ENCODE measurements at regions of chr14 and their contacts with region 1.

Region 1: DNA sequence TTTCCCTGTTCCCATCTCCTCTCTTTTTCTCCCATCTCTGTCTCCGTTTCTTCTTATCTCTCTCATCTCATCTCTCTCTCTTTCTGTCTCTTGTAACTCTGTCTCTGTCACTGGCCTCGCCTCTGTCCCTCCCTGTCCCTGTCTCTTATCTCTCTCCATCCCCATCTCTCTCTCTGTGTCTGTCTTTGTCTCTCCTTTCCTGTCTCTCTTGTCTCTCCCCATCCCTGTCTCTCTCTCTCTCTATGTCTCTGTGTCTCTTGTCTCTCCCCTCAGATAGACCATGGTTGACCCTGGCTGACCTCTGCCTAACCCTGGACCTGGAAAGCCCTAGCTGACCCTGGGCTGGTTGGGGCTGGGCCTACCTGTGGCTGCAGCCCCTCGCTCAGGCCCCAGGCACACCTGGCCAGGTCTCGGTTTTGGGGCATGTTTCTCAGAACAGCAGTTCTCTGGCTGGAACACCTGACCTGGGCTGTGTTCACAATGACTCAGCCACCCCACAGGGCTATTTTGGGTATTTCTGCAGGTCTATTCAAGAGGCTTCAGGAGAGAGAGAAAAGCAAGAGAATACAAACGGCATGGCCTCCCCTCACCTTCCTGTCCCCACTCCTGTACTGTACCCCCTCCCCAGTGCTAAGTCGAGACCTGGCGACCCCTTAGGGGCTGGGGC is 174.4 kb downstream of the TMEM121 start:
- DNase-seq: peak; percentile 45
- ATAC-seq: peak; percentile 5
- H3K4me3 Mint-ChIP-seq: peak overlapping the region; percentile 77
- H3K27ac Mint-ChIP-seq: peak overlapping the region; percentile 99
- H3K4me1 Mint-ChIP-seq: peaks cover 58% of the 10 kb centered on the region
- H3K27me3 Mint-ChIP-seq: no peaks in the 10 kb centered on the region
- CTCF ChIP-seq: no peak

Region 2: DNA sequence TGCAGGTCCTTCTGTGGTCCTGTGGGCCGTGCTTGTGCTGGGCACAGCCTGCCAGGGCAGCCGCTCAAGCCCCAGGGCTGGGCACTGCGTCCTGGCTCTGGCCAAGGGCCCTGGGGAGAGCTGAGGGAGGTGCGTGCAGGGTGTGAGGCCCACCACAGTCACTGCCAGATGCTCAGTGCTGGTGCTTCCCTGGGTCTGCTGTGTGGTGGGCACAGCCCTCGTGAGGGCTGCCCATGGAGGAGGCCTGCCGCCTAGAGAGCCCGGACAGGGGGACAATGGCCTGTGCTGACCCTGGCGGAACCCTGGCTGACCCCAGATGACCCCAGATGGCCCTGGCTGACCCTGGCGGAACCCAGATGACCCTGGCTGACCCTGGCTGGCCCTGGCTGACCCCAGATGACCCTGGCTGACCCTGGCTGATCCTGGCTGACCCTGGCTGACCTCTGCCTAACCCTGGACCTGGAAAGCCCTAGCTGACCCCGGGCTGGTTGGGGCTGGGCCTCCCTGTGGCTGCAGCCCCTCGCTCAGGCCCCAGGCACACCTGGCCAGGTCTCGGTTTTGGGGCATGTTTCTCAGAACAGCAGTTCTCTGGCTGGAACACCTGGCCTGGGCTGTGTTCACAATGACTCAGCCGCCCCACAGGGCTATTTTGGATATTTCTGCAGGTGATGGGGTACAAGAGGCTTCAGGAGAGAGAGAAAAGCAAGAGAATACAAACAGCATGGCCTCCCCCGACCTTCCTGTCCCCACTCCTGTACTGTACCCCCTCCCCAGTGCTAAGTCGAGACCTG is 119.0 kb before region 1 on chr14:
- CTCF ChIA-PET with region 1: no interaction called
- POLR2A ChIA-PET with region 1: interaction called, 10 read pairs
- intact Hi-C with region 1: no loop called
- DNase-seq: peak; percentile 36
- ATAC-seq: no peak
- H3K4me3 Mint-ChIP-seq: no peak overlapping the region
- H3K27ac Mint-ChIP-seq: peak overlapping the region; percentile 99
- H3K4me1 Mint-ChIP-seq: peaks cover 60% of the 10 kb centered on the region
- H3K27me3 Mint-ChIP-seq: no peaks in the 10 kb centered on the region
- CTCF ChIP-seq: no peak

Region 3: DNA sequence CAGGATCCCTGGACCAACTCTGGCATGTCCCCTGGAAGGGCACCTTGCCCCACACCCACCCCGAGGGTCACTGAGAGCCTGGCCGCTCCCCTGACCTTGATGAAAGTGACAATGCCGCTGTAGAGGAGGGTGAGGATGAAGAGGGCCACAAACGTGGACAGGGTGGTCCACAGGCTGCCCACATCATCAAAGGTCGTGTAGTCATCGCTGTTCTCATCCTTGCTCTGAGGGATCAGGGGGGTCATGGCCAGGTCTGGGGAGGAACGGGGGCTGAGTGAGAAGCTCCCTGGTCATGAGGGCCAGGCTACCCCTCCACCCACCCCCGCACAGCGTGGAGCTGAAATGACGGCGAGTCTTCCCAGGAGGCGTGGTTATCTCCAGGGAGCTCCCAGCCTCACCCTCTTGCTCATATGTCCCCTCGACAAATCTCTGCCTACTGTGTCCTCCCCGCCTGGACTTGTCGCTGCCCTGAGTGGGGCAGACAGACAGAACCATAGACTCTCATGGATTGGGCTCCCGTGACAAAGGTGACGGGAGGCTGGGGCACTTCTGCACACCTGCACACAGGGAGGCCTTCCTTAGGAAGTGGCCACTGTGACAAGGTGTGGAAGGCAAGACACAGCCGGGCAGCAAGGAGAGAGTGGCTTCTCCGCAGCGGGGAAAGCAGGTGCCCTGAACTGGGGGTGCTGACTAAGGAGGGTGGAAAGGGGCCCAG is 136.8 kb after region 1 on chr14:
- CTCF ChIA-PET with region 1: no interaction called
- POLR2A ChIA-PET with region 1: no interaction called
- intact Hi-C with region 1: no loop called
- DNase-seq: no peak
- ATAC-seq: peak; percentile 2
- H3K4me3 Mint-ChIP-seq: no peak overlapping the region
- H3K27ac Mint-ChIP-seq: peak overlapping the region; percentile 50
- H3K4me1 Mint-ChIP-seq: peaks cover 21% of the 10 kb centered on the region
- H3K27me3 Mint-ChIP-seq: no peaks in the 10 kb centered on the region
- CTCF ChIP-seq: no peak

Region 4: GRCh38 chr14:105944632-105945610 is 244.2 kb after region 1 on chr14:
- CTCF ChIA-PET with region 1: no interaction called
- POLR2A ChIA-PET with region 1: no interaction called
- intact Hi-C with region 1: no loop called
- DNase-seq: peak; percentile 53
- ATAC-seq: peak; percentile 70
- H3K4me3 Mint-ChIP-seq: peak overlapping the region; percentile 24
- H3K27ac Mint-ChIP-seq: peak overlapping the region; percentile 46
- H3K4me1 Mint-ChIP-seq: peaks cover 42% of the 10 kb centered on the region
- H3K27me3 Mint-ChIP-seq: no peaks in the 10 kb centered on the region
- CTCF ChIP-seq: no peak